ENCODE measurements at regions of chr9 and their contacts with region 1.

Region 1: GRCh38 chr9:38671748-38672147 is 48.2 kb downstream of the FAM240B start:
- H3K4me3 Mint-ChIP-seq: no peak overlapping the region
- H3K27ac Mint-ChIP-seq: no peak overlapping the region
- H3K4me1 Mint-ChIP-seq: peaks cover 25% of the 10 kb centered on the region
- H3K27me3 Mint-ChIP-seq: peaks cover 8% of the 10 kb centered on the region

Region 2: GRCh38 chr9:38620483-38621433 is 51.0 kb before region 1 on chr9 and contains the start of gene ANKRD18A:
- intact Hi-C with region 1: loop called (anchors 5 kb)
- H3K4me3 Mint-ChIP-seq: peak within 1 kb of the TSS; percentile 88
- H3K27ac Mint-ChIP-seq: peak within 1 kb of the TSS; percentile 60
- H3K4me1 Mint-ChIP-seq: peaks cover 26% of the 10 kb centered on the region
- H3K27me3 Mint-ChIP-seq: peaks cover 36% of the 10 kb centered on the region

Measured in dendritic cell treated with granulocyte-macrophage colony-stimulating factor and Interleukin-4, amounts not matched to agents 40 ng/mL and 50 ng/mL, for 4 days (primary cell).